ENCODE measurements at regions of chr5 and their contacts with region 1.

Region 1: DNA sequence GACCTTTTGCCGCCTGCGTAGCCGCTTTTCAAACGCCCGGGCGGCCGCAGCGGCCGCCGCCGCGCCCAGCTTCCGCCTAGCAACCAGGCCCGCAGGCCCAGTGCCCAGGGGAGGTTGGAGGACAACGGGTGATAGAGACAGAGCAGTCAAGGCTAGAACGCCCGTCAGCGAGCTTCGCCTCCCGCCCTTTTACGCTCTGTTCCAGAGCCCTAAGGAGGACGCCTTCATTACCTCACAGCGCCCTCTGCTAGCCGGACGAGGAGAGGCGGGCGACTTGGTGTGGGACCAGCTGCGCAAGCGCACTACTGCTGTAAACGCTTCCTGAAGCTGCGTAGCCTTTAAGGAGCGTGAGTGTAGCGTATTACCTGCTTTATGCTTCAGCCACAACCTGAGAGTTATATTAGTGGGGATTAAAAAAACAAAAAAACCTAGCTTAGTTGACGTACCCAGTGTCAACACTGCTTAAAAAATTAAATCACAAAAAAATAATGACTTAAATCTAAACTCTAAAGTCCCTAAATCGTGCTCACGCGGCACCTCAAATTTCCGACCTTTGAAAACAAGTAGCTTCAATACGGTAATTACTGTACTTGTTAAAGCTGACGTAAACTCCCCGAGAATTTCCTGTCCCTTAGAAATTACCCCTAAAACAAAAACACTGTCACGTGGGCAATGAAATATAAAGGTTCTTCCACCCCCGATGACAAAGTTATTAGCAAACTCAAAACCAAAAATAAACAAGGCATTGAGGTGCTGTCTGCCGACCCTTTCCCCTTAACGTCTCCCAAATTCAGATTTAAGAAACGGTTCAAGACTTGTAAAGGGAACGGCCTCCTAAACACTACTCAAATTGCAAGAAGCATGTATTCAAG is at the start of gene CEP120:
- DNase-seq: peak; percentile 87 to 99 (median 98)
- ATAC-seq: peak; percentile 92 to 93
- H3K4me3 Mint-ChIP-seq: no peak within 1 kb of the TSS
- H3K27ac Mint-ChIP-seq: peak within 1 kb of the TSS in 2 of 10 donors; percentile 99 to 100
- H3K4me1 Mint-ChIP-seq: peaks cover 10 to 32% (median 16%) of the 10 kb centered on the region in 4 donors
- H3K27me3 Mint-ChIP-seq: no peaks in the 10 kb centered on the region
- polyA plus RNA-seq, gene CEP120: 13.8 to 25.9 (median 22.7) TPM

Region 2: GRCh38 chr5:121962347-121962670 is 1461.2 kb before region 1 on chr5:
- POLR2A ChIA-PET with region 1: interaction called, 12 read pairs
- DNase-seq: no peak
- ATAC-seq: peak; percentile 13 to 28
- H3K4me3 Mint-ChIP-seq: peak overlapping the region; percentile 93 to 100 (median 98)
- H3K27ac Mint-ChIP-seq: peak overlapping the region; percentile 92 to 100 (median 97)
- H3K4me1 Mint-ChIP-seq: peaks cover 19 to 44% (median 42%) of the 10 kb centered on the region in 4 donors
- H3K27me3 Mint-ChIP-seq: peaks cover 0 to 13% (median 8%) of the 10 kb centered on the region in 5 donors

Region 3: GRCh38 chr5:122774861-122775549 is 648.5 kb before region 1 on chr5 and contains the start of gene SNX2:
- POLR2A ChIA-PET with region 1: interaction called, 17 read pairs
- DNase-seq: peak; percentile 83 to 92 (median 90)
- ATAC-seq: peak; percentile 86 to 89
- H3K4me3 Mint-ChIP-seq: peak within 1 kb of the TSS; percentile 93 to 98 (median 96)
- H3K27ac Mint-ChIP-seq: peak within 1 kb of the TSS; percentile 94 to 97 (median 96)
- H3K4me1 Mint-ChIP-seq: peaks cover 17 to 52% (median 38%) of the 10 kb centered on the region in 4 donors
- H3K27me3 Mint-ChIP-seq: peaks cover 0 to 5% (median 1%) of the 10 kb centered on the region in 5 donors
- polyA plus RNA-seq, gene SNX2: 47.6 to 76.5 (median 58.0) TPM

Region 4: GRCh38 chr5:123511648-123512605 is 88.4 kb after region 1 on chr5 and contains the start of gene CSNK1G3:
- POLR2A ChIA-PET with region 1: interaction called, 75 read pairs
- DNase-seq: peak; percentile 74 to 97 (median 90)
- ATAC-seq: peak; percentile 86 to 90
- H3K4me3 Mint-ChIP-seq: peak within 1 kb of the TSS; percentile 92 to 100 (median 98)
- H3K27ac Mint-ChIP-seq: peak within 1 kb of the TSS; percentile 95 to 99 (median 98)
- H3K4me1 Mint-ChIP-seq: peaks cover 20 to 52% (median 44%) of the 10 kb centered on the region in 4 donors
- H3K27me3 Mint-ChIP-seq: peaks cover 0 to 8% (median 0%) of the 10 kb centered on the region in 5 donors
- polyA plus RNA-seq, gene CSNK1G3: 17.7 to 31.9 (median 23.0) TPM

Region 5: GRCh38 chr5:123549256-123549904 is 125.9 kb after region 1 on chr5:
- POLR2A ChIA-PET with region 1: interaction called, 13 read pairs
- DNase-seq: peak in 9 of 10 donors; percentile 29 to 71 (median 51)
- ATAC-seq: peak; percentile 95 to 98
- H3K4me3 Mint-ChIP-seq: peak overlapping the region in 8 of 10 donors; percentile 20 to 75 (median 30)
- H3K27ac Mint-ChIP-seq: peak overlapping the region; percentile 7 to 92 (median 83)
- H3K4me1 Mint-ChIP-seq: peaks cover 15 to 59% (median 28%) of the 10 kb centered on the region in 4 donors
- H3K27me3 Mint-ChIP-seq: no peaks in the 10 kb centered on the region

Measured in naive thymus-derived CD8-positive, alpha-beta T cell (primary cell).